HCT116 (cell line): ENCODE measurements at regions of chr6 and their contacts with region 1.

Region 1: GRCh38 chr6:33585403-33586107 is 5.5 kb upstream of the BAK1 start:
- DNase-seq: peak; percentile 62
- ATAC-seq: peak; percentile 63
- H3K4me3 ChIP-seq: no peak overlapping the region
- H3K27ac ChIP-seq: no peak overlapping the region
- H3K4me1 ChIP-seq: peaks cover 17 to 48% of the 10 kb centered on the region in 2 experiments
- H3K27me3 ChIP-seq: no peaks in the 10 kb centered on the region
- CTCF ChIP-seq: peak in 2 of 3 experiments; percentile 91 to 98; a peak in 4 of 6 replicates
- POLR2A ChIP-seq: no peak
- RAD21 ChIP-seq: no peak

Region 2: DNA sequence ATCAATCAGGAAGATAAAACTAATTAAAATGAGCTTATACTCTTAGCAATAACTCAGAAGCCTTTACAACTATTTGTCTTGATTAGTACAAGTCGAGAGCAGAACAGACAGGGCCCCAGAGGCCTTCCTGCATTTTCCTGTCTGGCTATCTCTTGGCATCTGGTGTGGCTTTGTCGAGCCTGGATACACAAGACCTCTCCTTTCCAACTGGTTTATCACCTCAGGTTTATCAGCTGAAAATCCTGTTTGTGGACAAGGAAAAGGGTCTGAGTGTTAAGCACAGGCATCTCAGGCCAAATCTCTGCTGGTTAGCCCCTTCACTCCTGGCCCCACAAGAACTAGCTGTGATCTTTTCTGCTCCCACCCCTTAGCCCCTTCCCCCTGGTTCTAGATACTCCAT is 38.1 kb before region 1 on chr6:
- CTCF ChIA-PET with region 1: no interaction called
- POLR2A ChIA-PET with region 1: no interaction called
- RAD21 ChIA-PET with region 1: no interaction called
- intact Hi-C with region 1: no loop called
- DNase-seq: no peak
- ATAC-seq: no peak
- H3K4me3 ChIP-seq: no peak overlapping the region
- H3K27ac ChIP-seq: no peak overlapping the region
- H3K4me1 ChIP-seq: no peaks in the 10 kb centered on the region
- H3K27me3 ChIP-seq: no peaks in the 10 kb centered on the region
- CTCF ChIP-seq: no peak
- POLR2A ChIP-seq: no peak
- RAD21 ChIP-seq: no peak

Region 3: DNA sequence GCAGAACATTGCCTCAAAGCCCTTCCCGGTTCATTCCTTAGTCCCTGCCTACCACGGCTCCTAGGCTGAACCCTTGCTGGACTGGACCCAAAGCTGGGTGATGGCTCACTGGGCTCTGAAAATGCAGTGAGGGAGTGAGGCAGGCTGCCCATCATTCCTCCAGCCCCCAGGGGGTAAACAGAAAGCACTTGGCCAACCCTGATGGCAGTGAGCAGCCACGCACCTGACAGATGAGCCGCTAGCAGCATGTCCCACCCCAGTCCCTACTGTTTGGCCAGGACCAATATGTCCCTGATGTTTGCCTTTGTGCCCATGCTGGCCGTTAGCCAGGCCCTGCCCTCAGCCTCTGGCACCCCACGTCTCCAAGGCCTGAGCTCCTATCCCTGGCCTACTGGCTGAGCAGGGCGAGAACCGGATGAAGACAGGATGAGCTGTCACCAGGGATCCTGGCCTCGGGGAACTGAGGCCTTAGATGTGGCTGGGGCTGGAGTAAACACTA is 13.9 kb after region 1 on chr6:
- CTCF ChIA-PET with region 1: interaction called, 7 read pairs
- POLR2A ChIA-PET with region 1: interaction called, 8 read pairs
- RAD21 ChIA-PET with region 1: no interaction called
- intact Hi-C with region 1: loop called (anchors 1 kb)
- DNase-seq: no peak
- ATAC-seq: peak; percentile 79
- H3K4me3 ChIP-seq: no peak overlapping the region
- H3K27ac ChIP-seq: peak overlapping the region; percentile 46
- H3K4me1 ChIP-seq: peaks cover 17 to 33% of the 10 kb centered on the region in 2 experiments
- H3K27me3 ChIP-seq: no peaks in the 10 kb centered on the region
- CTCF ChIP-seq: no peak
- POLR2A ChIP-seq: no peak
- RAD21 ChIP-seq: no peak

Region 4: DNA sequence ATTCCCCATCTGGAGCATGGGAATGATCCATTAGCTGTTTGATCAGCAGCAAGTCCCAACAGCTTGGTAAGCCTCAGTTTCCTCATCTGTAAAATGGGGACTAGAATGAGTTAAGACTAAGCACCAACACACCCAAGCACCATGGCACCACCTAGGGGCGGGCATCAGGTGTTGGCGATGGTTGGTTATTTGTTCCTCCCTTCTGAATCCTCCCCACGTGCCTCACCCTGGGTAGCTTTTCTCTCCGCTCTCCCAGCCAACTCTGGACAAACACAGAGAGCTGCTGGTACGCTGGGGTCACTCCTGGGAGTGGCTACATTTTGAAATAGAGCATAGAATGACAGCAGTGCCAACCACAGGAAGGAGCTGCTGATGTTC is 22.2 kb after region 1 on chr6:
- CTCF ChIA-PET with region 1: interaction called, 17 read pairs
- POLR2A ChIA-PET with region 1: interaction called, 8 read pairs
- RAD21 ChIA-PET with region 1: interaction called, 4 to 14 read pairs
- intact Hi-C with region 1: no loop called
- DNase-seq: peak; percentile 37
- ATAC-seq: peak; percentile 80
- H3K4me3 ChIP-seq: no peak overlapping the region
- H3K27ac ChIP-seq: no peak overlapping the region
- H3K4me1 ChIP-seq: peaks cover 0 to 76% of the 10 kb centered on the region in 2 experiments; a peak in 3 of 4 replicates
- H3K27me3 ChIP-seq: no peaks in the 10 kb centered on the region
- CTCF ChIP-seq: peak; percentile 63 to 68 (median 66); a peak in 5 of 6 replicates
- POLR2A ChIP-seq: no peak
- RAD21 ChIP-seq: peak; percentile 84

Region 5: DNA sequence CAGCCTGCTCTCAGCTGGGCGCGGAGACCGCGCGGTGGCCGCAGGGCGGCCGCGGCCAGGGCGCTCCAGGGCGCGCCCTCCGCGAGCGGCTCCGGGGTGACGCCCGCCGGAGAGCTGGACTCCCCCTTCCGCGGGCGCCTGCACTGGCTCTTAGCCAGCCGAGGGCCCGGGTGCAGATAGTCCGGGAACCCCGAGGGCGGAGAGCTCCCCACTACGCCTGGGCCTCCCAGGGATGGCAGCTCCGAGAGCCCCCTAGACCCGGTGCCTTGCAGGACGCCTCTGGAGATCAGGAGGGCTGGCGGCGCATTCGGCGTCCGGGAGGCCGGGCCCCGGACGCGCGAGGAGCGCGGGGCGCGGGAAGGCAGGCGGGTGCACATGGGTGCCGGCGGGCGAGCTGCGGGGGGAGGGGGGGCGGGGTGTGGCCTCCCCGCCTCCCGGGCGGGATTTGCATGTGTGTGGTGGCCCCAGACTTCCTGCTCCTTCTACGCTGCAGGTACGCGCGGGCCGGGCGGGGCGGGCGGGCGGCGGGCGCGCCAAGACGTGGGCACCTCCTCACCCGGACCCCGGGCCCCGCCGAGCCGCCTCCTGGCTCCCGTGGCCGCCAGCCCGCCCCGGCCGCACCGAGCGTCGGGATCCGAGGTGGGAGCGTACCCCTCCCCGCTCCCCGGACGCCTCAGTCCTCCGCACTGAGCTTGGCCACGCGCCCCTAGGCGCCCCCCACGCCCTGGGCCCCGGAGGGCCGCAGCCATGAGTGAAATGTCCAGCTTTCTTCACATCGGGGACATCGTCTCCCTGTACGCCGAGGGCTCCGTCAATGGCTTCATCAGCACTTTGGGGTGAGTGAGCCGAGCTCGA is 35.5 kb after region 1 on chr6 and contains the start of gene ITPR3:
- CTCF ChIA-PET with region 1: interaction called, 5 read pairs
- POLR2A ChIA-PET with region 1: interaction called, 8 read pairs
- RAD21 ChIA-PET with region 1: interaction called, 3 read pairs
- intact Hi-C with region 1: loop called (anchors 5 kb)
- DNase-seq: peak; percentile 37
- ATAC-seq: peak; percentile 75
- H3K4me3 ChIP-seq: peak within 1 kb of the TSS; percentile 91 to 99
- H3K27ac ChIP-seq: peak within 1 kb of the TSS; percentile 98
- H3K4me1 ChIP-seq: peaks cover 24 to 37% of the 10 kb centered on the region in 2 experiments
- H3K27me3 ChIP-seq: no peaks in the 10 kb centered on the region
- CTCF ChIP-seq: no peak
- POLR2A ChIP-seq: peak; percentile 21
- RAD21 ChIP-seq: no peak
- total RNA-seq, gene ITPR3: 103 TPM

Region 6: DNA sequence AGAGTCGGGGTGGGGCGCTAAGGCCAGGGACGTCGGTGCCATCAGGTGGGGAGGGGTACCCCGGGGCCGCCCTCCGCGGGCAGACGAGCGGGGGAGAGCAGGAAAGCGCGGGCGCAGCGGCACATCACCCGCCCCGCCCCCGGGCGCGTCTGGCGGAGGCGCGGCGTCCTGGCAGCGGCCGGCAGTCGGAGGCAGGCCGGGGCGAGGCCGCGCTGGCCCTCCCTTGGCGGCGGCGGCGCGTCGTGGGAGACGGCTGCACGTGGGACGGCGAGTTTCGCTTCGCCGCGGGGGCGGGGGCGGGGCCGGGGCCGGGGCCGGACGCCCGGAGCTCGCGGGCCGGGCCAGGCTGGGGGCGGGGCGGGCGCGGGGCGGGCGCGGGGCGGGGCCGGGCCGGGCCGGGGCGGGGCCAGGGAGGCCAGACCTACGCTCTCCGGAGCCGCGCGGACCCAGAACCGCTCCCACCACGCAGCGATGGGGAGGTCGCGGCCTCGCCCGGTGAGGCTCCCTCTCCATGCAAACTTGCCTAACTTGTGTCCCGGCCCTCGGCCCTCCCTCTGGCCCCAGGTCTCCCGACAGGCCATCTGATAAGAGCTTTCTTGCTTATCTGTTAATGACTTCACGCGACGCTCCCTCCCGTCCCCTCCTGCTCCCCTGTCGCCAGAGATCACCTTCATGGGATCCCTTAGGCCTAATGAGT is 48.1 kb after region 1 on chr6:
- CTCF ChIA-PET with region 1: interaction called, 8 read pairs
- POLR2A ChIA-PET with region 1: no interaction called
- RAD21 ChIA-PET with region 1: interaction called in 1 of 2 experiments, 4 read pairs
- intact Hi-C with region 1: loop called (anchors 5 kb)
- DNase-seq: no peak
- ATAC-seq: peak; percentile 85
- H3K4me3 ChIP-seq: peak overlapping the region; percentile 31 to 45
- H3K27ac ChIP-seq: peak overlapping the region; percentile 27; the same call in 1 of the 2 replicates
- H3K4me1 ChIP-seq: peaks cover 18 to 29% of the 10 kb centered on the region in 2 experiments
- H3K27me3 ChIP-seq: no peaks in the 10 kb centered on the region
- CTCF ChIP-seq: no peak
- POLR2A ChIP-seq: no peak
- RAD21 ChIP-seq: no peak

Region 7: DNA sequence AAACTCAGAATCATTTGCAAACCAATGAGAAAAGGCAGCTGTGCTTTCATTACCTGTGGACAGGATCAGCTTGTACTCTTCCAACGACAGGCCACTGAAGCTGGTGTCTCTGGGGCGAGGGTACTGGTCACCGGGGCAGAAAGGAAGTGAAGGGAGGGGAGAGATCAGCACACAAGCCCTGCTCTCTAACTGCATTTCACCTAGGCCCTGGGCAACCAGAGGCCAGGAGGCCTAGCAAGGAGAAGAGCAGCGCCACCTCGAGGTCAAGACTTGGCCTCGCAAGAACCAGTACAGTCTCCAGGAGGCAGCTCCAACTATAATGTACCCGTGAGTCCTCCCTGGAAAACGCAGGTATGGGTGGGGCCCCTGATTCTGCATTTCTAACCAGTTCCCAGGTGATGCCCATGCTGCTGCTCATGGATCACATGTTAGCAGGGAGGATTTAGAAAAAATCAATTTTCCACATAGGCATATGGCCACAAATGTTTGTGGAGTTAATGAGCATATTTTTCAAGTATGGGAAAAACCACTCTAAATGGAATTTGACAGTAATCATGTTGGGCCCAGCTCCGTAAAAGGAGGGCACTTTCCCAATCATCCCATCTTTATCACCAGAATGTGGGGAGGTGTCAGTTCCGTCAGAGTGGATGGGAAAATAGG is 115.0 kb after region 1 on chr6:
- CTCF ChIA-PET with region 1: interaction called, 12 read pairs
- POLR2A ChIA-PET with region 1: no interaction called
- RAD21 ChIA-PET with region 1: no interaction called
- intact Hi-C with region 1: loop called (anchors 1 kb)
- DNase-seq: peak; percentile 65
- ATAC-seq: peak; percentile 88
- H3K4me3 ChIP-seq: no peak overlapping the region
- H3K27ac ChIP-seq: no peak overlapping the region
- H3K4me1 ChIP-seq: peaks cover 4 to 6% of the 10 kb centered on the region in 2 experiments; a peak in 3 of 4 replicates
- H3K27me3 ChIP-seq: no peaks in the 10 kb centered on the region
- CTCF ChIP-seq: peak; percentile 79 to 89 (median 82)
- POLR2A ChIP-seq: no peak
- RAD21 ChIP-seq: peak; percentile 77

Region 8: GRCh38 chr6:33761922-33762629 is 176.5 kb after region 1 on chr6:
- CTCF ChIA-PET with region 1: interaction called, 5 read pairs
- POLR2A ChIA-PET with region 1: no interaction called
- RAD21 ChIA-PET with region 1: no interaction called
- intact Hi-C with region 1: loop called (anchors 2 kb)
- DNase-seq: no peak
- ATAC-seq: peak; percentile 87
- H3K4me3 ChIP-seq: no peak overlapping the region
- H3K27ac ChIP-seq: no peak overlapping the region; the same call in 1 of the 2 replicates
- H3K4me1 ChIP-seq: peaks cover 6 to 19% of the 10 kb centered on the region in 2 experiments; a peak in 3 of 4 replicates
- H3K27me3 ChIP-seq: no peaks in the 10 kb centered on the region
- CTCF ChIP-seq: peak; percentile 58 to 88 (median 70)
- POLR2A ChIP-seq: no peak
- RAD21 ChIP-seq: peak; percentile 89

Region 9: GRCh38 chr6:33886673-33887144 is 301.2 kb after region 1 on chr6:
- CTCF ChIA-PET with region 1: no interaction called
- POLR2A ChIA-PET with region 1: no interaction called
- RAD21 ChIA-PET with region 1: no interaction called
- intact Hi-C with region 1: no loop called
- DNase-seq: no peak
- ATAC-seq: no peak
- H3K4me3 ChIP-seq: no peak overlapping the region
- H3K27ac ChIP-seq: no peak overlapping the region
- H3K4me1 ChIP-seq: peaks cover 10 to 27% of the 10 kb centered on the region in 2 experiments
- H3K27me3 ChIP-seq: no peaks in the 10 kb centered on the region
- CTCF ChIP-seq: no peak
- POLR2A ChIP-seq: no peak
- RAD21 ChIP-seq: no peak